GM23248 (cell line): ENCODE measurements at regions of chr4 and their contacts with region 1.

Region 1: GRCh38 chr4:6327041-6327917 is 57.6 kb downstream of the WFS1 start:
- DNase-seq: peak; percentile 77
- H3K4me3 ChIP-seq: no peak overlapping the region
- H3K27ac ChIP-seq: no peak overlapping the region
- H3K4me1 ChIP-seq: no peaks in the 10 kb centered on the region; the same call in 1 of the 2 replicates
- H3K27me3 ChIP-seq: peaks cover 16% of the 10 kb centered on the region; the same call in 1 of the 2 replicates

Region 2: GRCh38 chr4:6269616-6270511 is 57.4 kb before region 1 on chr4 and contains the start of gene WFS1:
- in situ Hi-C with region 1: loop called (anchors 5 kb)
- DNase-seq: peak; percentile 99
- H3K4me3 ChIP-seq: peak within 1 kb of the TSS; percentile 86
- H3K27ac ChIP-seq: no peak within 1 kb of the TSS
- H3K4me1 ChIP-seq: peaks cover 14% of the 10 kb centered on the region
- H3K27me3 ChIP-seq: peaks cover 5% of the 10 kb centered on the region; the same call in 1 of the 2 replicates
- total RNA-seq, gene WFS1: 21.5 and 24.2 TPM in 2 replicates

Region 3: GRCh38 chr4:6546681-6547447 is 219.6 kb after region 1 on chr4:
- in situ Hi-C with region 1: loop called (anchors 10 kb)
- DNase-seq: peak; percentile 80
- H3K4me3 ChIP-seq: no peak overlapping the region
- H3K27ac ChIP-seq: no peak overlapping the region
- H3K4me1 ChIP-seq: no peaks in the 10 kb centered on the region
- H3K27me3 ChIP-seq: no peaks in the 10 kb centered on the region; the same call in 1 of the 2 replicates